H1 (cell line): ENCODE measurements at regions of chr2 and their contacts with region 1.

Region 1: GRCh38 chr2:133517876-133518275 is 50.4 kb downstream of the NCKAP5 start:
- DNase-seq: no peak
- H3K4me3 ChIP-seq: no peak overlapping the region
- H3K27ac ChIP-seq: no peak overlapping the region
- H3K4me1 ChIP-seq: no peaks in the 10 kb centered on the region
- H3K27me3 ChIP-seq: peaks cover 12 to 25% (median 18%) of the 10 kb centered on the region in 4 experiments
- CTCF ChIP-seq: no peak
- EP300 ChIP-seq: no peak
- POLR2A ChIP-seq: no peak
- RAD21 ChIP-seq: no peak

Region 2: DNA sequence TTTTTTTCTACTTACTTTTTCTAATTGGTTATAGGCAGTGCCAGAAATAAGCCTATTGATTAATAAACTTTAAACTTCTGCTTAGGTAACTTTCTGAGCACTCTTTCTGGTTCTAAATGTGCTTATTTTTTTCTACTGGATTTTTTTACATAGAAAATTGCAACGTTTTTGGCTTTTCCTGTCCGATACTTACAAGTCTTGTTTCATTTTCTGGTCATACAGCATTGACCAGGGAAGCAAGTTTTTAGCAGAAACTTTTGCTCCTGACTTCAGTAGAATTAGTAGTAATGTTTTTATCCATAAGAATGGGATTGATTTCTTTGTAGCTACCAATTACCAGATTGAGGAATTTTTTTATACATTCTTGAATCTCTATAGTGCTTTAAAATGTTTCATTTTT is 13.5 kb after region 1 on chr2:
- CTCF ChIA-PET with region 1: interaction called, 27 read pairs
- POLR2A ChIA-PET with region 1: no interaction called
- DNase-seq: no peak
- H3K4me3 ChIP-seq: no peak overlapping the region
- H3K27ac ChIP-seq: no peak overlapping the region
- H3K4me1 ChIP-seq: no peaks in the 10 kb centered on the region
- H3K27me3 ChIP-seq: no peaks in the 10 kb centered on the region
- CTCF ChIP-seq: no peak
- EP300 ChIP-seq: no peak
- POLR2A ChIP-seq: no peak
- RAD21 ChIP-seq: no peak

Region 3: DNA sequence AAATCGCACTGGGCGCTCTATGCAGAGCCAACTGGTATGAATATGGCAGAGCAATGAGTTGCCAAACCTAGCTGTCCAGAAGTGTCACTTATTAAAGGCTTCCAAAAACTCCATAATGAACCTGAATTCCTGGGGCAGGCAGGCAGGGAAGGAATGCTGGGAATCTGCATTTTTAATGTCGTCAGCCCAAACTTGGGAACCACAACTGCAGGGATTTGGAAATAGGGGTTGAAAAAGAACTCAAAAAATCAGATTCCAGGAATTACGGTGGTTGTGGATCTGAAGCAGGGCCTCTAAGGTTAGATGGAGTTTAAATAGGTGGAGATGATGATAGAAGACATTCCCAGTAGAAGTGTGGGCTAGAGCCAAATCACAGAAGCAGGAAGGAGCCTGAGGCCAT is 35.4 kb after region 1 on chr2:
- CTCF ChIA-PET with region 1: interaction called, 14 read pairs
- POLR2A ChIA-PET with region 1: no interaction called
- DNase-seq: no peak
- H3K4me3 ChIP-seq: no peak overlapping the region
- H3K27ac ChIP-seq: no peak overlapping the region
- H3K4me1 ChIP-seq: no peaks in the 10 kb centered on the region
- H3K27me3 ChIP-seq: no peaks in the 10 kb centered on the region
- CTCF ChIP-seq: no peak
- EP300 ChIP-seq: no peak
- POLR2A ChIP-seq: no peak
- RAD21 ChIP-seq: no peak

Region 4: DNA sequence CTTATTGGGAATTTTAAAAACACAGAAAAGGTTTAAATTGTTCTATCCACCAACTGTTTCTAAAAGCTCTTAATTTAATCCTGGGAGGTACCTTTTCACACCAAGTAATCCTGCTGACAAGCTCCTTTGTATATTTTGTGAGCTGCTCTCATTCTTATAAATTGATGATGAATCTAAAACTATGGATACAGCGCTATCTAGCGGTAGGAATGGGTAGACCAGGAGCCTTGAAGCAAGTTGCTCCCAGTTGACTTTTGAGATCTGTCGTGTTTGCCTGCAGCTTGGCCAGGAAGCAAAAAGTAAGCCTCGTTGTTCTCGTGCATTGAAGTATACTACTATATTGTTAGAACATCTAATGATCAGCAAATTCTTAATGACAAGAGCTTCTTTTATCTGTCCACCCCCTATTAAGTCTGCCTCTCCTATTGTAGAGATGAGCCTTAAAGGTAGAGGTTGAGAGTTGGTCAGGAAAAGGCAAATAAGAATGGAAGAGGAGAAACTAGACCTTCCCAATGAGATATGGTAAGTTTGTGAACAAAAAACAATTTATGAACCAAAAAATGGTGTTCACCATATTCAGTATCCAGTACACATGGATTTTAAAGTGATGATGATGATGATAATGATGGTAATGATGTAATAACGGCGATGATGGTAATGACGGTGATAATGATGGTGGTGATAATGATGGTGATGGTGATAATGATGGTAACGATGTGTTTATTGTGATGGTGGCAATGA is 262.4 kb after region 1 on chr2:
- CTCF ChIA-PET with region 1: interaction called, 19 read pairs
- POLR2A ChIA-PET with region 1: no interaction called
- DNase-seq: peak; percentile 10 to 75
- H3K4me3 ChIP-seq: no peak overlapping the region
- H3K27ac ChIP-seq: no peak overlapping the region
- H3K4me1 ChIP-seq: no peaks in the 10 kb centered on the region
- H3K27me3 ChIP-seq: no peaks in the 10 kb centered on the region
- CTCF ChIP-seq: peak; percentile 16 to 81 (median 65)
- EP300 ChIP-seq: no peak
- POLR2A ChIP-seq: no peak
- RAD21 ChIP-seq: peak; percentile 88 to 89